Activated T-helper 1 cell treated with anti-CD3 and anti-CD28 coated beads, Interleukin-12 subunit alpha, Interleukin-12 subunit beta, Interleukin-2, Interleukin-4 antibody, amounts not matched to agents 30 ng/mL and 10 ng/mL and 1 ng/mL, durations not matched to agents 14 hours and 24 hours and 36 hours (primary cell): ENCODE measurements at regions of chr20 and their contacts with region 1.

Region 1: GRCh38 chr20:33443512-33444239 is at the start of gene SNTA1:
- DNase-seq: peak; percentile 82
- H3K4me3 Mint-ChIP-seq: peak within 1 kb of the TSS; percentile 88
- H3K27ac Mint-ChIP-seq: peak within 1 kb of the TSS; percentile 76
- H3K4me1 Mint-ChIP-seq: peaks cover 10% of the 10 kb centered on the region
- H3K27me3 Mint-ChIP-seq: peaks cover 11% of the 10 kb centered on the region
- total RNA-seq, gene SNTA1: 0.76 and 0.91 TPM in 2 replicates

Region 2: DNA sequence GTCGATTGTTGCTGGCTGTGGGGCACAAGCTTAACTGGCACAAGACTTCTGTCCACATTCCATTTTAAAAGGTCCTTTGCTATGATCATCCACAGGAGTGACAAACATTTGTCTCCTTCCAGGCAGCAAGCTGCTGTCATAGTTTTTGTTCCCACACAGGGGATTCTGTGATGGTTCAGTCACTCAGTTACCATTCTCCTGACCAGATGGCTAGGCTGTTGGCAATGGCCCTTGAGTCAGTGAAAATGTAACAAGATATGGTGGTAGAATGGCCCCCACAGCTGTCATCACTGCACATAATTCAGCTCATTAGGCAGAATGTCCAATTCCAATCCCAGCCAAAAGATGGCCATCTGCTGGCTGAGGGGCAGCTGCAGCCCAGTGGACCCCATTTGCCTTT is 194.2 kb before region 1 on chr20:
- intact Hi-C with region 1: no loop called
- DNase-seq: no peak
- H3K4me3 Mint-ChIP-seq: no peak overlapping the region
- H3K27ac Mint-ChIP-seq: no peak overlapping the region
- H3K4me1 Mint-ChIP-seq: no peaks in the 10 kb centered on the region
- H3K27me3 Mint-ChIP-seq: peaks cover 4% of the 10 kb centered on the region

Region 3: GRCh38 chr20:33460711-33461110 is 17.0 kb after region 1 on chr20:
- intact Hi-C with region 1: loop called (anchors 1 kb)
- DNase-seq: no peak
- H3K4me3 Mint-ChIP-seq: no peak overlapping the region
- H3K27ac Mint-ChIP-seq: no peak overlapping the region
- H3K4me1 Mint-ChIP-seq: no peaks in the 10 kb centered on the region
- H3K27me3 Mint-ChIP-seq: no peaks in the 10 kb centered on the region

Region 4: GRCh38 chr20:33933469-33933909 is 489.8 kb after region 1 on chr20:
- intact Hi-C with region 1: no loop called
- DNase-seq: peak; percentile 42
- H3K4me3 Mint-ChIP-seq: no peak overlapping the region
- H3K27ac Mint-ChIP-seq: no peak overlapping the region
- H3K4me1 Mint-ChIP-seq: no peaks in the 10 kb centered on the region
- H3K27me3 Mint-ChIP-seq: peaks cover 3% of the 10 kb centered on the region